ENCODE measurements at regions of chr18 and their contacts with region 1.

Region 1: DNA sequence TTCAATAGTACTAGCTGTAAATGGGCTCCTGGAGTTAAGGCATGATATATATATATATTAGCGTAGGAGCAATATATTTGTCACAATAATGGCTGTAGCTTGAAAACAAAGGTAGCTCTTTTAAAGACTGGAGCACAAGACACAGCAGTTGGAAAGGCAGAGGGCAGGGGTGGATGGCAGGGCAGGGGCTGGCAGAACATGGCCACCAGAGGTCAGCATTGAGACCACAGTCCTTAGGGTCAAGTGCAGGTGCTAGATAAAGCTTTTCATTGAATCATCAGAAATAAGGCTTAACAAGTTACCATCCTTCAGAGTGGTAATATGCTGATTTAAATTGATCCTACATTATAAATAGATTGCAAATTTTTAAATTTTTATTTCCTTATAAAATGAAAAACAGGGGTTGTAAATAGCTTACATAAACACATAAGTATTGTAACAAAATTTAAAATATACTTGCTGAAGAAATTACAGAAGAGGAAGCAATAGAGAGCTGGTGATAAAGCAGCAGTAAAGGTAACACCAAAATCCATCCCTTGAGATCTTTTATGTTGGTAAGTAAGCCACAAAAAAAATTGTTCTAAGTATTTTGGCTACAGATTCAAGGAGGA is 161.2 kb upstream of the PIEZO2 start:
- DNase-seq: no peak
- H3K4me3 ChIP-seq: no peak overlapping the region
- CTCF ChIP-seq: peak; percentile 88

Region 2: DNA sequence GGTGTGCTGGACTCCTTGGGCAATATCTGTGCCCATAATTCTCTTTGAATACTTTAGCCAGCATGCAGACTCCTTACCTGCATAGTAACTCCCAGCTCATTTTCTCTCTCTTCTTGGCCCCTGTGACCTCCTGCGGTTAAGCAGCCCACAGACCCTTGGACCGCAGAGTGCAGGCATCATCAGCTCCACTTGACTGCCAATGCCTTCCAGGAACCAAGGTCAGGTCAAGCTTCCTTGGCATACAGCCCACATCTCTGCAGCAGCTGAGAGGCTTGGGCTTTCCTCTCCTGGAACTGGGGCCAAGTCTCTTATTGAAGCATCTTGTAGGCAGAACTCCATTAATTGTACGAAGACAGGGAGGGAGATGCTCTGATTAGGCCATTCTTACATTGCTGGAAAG is 31.1 kb before region 1 on chr18:
- in situ Hi-C with region 1: loop called (anchors 5 kb)
- DNase-seq: no peak
- H3K4me3 ChIP-seq: no peak overlapping the region
- CTCF ChIP-seq: no peak

Region 3: GRCh38 chr18:11518788-11519685 is 208.5 kb after region 1 on chr18:
- in situ Hi-C with region 1: loop called (anchors 25 kb)
- DNase-seq: no peak
- H3K4me3 ChIP-seq: no peak overlapping the region
- CTCF ChIP-seq: peak; percentile 59